ENCODE measurements at regions of chr3 and their contacts with region 1.

Region 1: GRCh38 chr3:43894176-43895049 is 203.7 kb downstream of the ABHD5 start:
- DNase-seq: peak in 8 of 10 donors; percentile 22 to 65 (median 53)
- H3K4me3 ChIP-seq: peak overlapping the region; percentile 35 to 72 (median 56)
- H3K27ac ChIP-seq: peak overlapping the region in 36 of 59 donors; percentile 4 to 77 (median 55)
- H3K27me3 ChIP-seq: peaks cover 0 to 13% (median 0%) of the 10 kb centered on the region in 45 donors
- CTCF ChIP-seq: peak in 1 of 56 donors; percentile 10

Region 2: GRCh38 chr3:44104668-44105321 is 210.4 kb after region 1 on chr3:
- intact Hi-C with region 1: loop called in 1 of 2 experiments (anchors 10 kb)
- DNase-seq: no peak
- H3K4me3 ChIP-seq: no peak overlapping the region
- H3K27ac ChIP-seq: no peak overlapping the region
- H3K27me3 ChIP-seq: no peaks in the 10 kb centered on the region
- CTCF ChIP-seq: no peak